Ascending aorta (tissue), 2 donors: ENCODE measurements at regions of chr7 and their contacts with region 1.

Region 1: DNA sequence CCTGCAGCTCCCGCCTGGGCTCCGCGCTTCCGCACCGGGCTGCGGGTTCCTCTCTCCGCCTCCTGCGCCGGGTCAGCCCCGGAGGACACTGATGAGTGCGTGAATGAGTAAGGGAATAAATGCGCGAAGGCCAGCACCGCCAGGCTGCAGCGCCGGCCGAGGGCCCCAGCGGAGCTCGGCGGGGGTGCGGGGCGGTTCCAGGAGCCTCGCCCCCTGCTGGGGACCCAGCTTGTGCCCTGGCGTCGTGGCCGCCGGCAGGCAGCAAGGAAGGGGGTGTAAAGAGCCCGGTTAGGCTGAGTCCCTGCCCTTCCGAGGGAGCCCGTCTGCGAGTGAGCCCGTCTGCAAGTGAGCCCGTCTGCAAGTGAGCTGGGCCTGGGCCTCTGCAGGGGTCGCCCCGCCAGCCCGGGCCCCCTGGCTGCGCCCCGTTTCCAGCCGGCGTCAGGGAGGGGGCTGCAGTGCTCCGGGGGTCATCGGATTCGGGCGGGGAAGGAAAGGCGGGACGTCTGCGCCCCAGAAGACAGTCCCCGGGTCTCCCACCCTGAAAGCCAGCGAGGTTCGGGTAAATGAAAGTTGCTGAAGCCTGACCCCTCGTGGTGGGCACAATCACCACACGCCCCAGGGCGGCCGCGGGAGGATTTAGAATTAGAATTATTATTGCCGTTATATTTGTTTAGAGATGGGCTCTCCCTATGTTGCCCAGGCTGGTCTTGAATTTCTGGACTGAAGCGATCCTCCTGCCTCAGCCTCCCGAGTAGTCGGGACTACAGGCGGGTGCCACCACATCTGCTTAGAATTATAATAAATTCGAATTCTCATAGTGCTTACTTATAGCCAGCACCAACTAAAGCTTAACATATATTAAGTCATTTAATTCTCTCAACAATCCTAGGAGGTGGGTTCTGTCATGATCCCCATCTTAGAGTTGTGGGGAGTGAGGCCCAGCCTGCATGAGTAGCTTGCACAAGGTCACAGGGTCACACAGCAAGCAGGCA is 8.6 kb upstream of the CRYGN start:
- DNase-seq: peak in 1 of 2 donors; percentile 87
- H3K4me3 ChIP-seq: peak overlapping the region; percentile 66 to 70
- H3K27ac ChIP-seq: peak overlapping the region; percentile 30
- H3K4me1 ChIP-seq: peaks cover 0 to 2% of the 10 kb centered on the region in 2 donors
- H3K27me3 ChIP-seq: no peaks in the 10 kb centered on the region
- CTCF ChIP-seq: peak; percentile 76 to 84 (median 82)

Region 2: DNA sequence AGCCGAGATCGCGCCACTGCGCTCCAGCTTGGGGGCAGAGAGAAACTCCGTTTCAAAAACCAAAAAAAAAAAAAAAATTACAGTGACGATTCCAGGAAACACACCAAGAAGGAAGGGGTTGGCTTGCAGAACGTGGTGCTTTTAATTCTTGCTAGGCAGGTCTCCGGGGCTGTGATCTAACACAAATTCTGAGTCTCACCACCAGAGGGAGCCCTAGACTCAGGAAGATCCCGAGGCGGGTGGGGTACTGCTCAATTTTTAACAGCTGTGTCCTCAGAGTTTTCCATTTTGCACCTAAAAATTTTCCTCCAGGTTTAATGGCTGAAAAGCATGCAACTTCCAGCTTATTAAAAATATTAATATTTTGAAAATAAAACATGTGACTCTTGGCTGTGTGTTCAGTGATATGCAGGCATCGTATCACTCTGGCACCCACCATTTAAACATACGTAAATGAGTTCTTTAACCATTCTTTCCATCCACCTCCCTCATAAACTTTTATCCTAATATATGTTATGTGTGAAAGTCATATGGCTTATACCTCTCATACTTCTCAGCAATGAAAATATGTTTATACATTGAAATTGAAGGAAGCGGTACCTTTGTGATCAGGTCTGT is 133.4 kb before region 1 on chr7:
- intact Hi-C with region 1: loop called (anchors 1 kb)
- DNase-seq: peak in 1 of 2 donors; percentile 88
- H3K4me3 ChIP-seq: no peak overlapping the region
- H3K27ac ChIP-seq: no peak overlapping the region
- H3K4me1 ChIP-seq: peaks cover 3 to 12% of the 10 kb centered on the region in 2 donors
- H3K27me3 ChIP-seq: no peaks in the 10 kb centered on the region
- CTCF ChIP-seq: peak; percentile 69 to 84 (median 77)

Region 3: GRCh38 chr7:151368136-151368571 is 80.4 kb before region 1 on chr7:
- intact Hi-C with region 1: loop called (anchors 1 kb)
- DNase-seq: peak in 1 of 2 donors; percentile 90
- H3K4me3 ChIP-seq: no peak overlapping the region
- H3K27ac ChIP-seq: no peak overlapping the region
- H3K4me1 ChIP-seq: peaks cover 6 to 37% of the 10 kb centered on the region in 2 donors
- H3K27me3 ChIP-seq: no peaks in the 10 kb centered on the region
- CTCF ChIP-seq: peak; percentile 90 to 97 (median 92)

Region 4: GRCh38 chr7:151408839-151409666 is 39.5 kb before region 1 on chr7:
- intact Hi-C with region 1: loop called (anchors 5 kb)
- DNase-seq: no peak
- H3K4me3 ChIP-seq: peak overlapping the region; percentile 51 to 65
- H3K27ac ChIP-seq: peak overlapping the region in 1 of 2 donors; percentile 4
- H3K4me1 ChIP-seq: peaks cover 8 to 19% of the 10 kb centered on the region in 2 donors
- H3K27me3 ChIP-seq: peaks cover 12% of the 10 kb centered on the region
- CTCF ChIP-seq: no peak

Region 5: DNA sequence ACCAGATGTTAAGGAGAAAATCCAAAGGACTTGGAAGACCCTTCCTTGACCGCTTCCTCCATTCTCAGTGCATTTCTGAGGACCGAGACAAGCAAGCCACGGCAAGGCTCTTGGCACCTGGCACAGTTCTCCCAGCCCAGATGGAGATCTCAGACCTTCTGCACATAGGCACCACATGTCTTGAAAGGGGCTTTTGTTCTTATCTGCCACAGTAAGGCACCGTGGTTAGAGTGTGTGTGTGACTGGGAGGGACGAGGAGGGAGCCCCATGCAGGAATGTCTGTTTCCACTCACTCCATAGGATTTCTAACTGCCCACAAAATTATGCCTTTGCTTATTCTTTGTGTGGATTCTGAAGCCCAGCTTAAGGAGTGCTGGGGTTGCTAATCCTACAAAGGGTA is 28.4 kb before region 1 on chr7:
- intact Hi-C with region 1: no loop called
- DNase-seq: no peak
- H3K4me3 ChIP-seq: no peak overlapping the region
- H3K27ac ChIP-seq: no peak overlapping the region
- H3K4me1 ChIP-seq: no peaks in the 10 kb centered on the region
- H3K27me3 ChIP-seq: no peaks in the 10 kb centered on the region
- CTCF ChIP-seq: no peak

Region 6: GRCh38 chr7:151484971-151485707 is 36.6 kb after region 1 on chr7:
- intact Hi-C with region 1: no loop called
- DNase-seq: no peak
- H3K4me3 ChIP-seq: no peak overlapping the region
- H3K27ac ChIP-seq: peak overlapping the region; percentile 52 to 62
- H3K4me1 ChIP-seq: peaks cover 0 to 24% of the 10 kb centered on the region in 2 donors
- H3K27me3 ChIP-seq: no peaks in the 10 kb centered on the region
- CTCF ChIP-seq: no peak